GM13977 (cell line): ENCODE measurements at regions of chr12 and their contacts with region 1.

Region 1: DNA sequence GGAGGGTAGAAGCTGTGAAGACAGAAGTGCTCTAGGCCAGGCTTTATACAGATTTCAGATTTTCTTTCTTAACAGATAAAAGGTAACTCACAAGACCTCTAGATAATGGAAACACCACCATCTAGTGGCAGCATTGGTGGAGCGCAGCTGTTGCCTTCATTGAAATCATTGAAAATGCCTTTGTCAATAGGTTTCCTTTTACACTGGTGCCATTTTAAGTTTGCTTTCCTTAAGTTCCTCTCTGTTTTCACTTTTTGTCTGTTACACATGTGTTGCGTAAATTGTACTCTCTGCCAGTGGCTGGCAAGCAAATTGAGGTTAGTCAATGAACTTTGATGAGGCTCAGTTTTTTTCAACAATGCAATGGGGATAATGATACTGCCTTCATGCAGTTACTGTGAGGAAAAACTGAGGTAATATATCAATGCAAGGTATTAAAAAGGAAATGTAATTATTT is 31.1 kb downstream of the ALDH1L2 start:
- DNase-seq: peak; percentile 37
- CTCF ChIP-seq: peak; percentile 93

Region 2: DNA sequence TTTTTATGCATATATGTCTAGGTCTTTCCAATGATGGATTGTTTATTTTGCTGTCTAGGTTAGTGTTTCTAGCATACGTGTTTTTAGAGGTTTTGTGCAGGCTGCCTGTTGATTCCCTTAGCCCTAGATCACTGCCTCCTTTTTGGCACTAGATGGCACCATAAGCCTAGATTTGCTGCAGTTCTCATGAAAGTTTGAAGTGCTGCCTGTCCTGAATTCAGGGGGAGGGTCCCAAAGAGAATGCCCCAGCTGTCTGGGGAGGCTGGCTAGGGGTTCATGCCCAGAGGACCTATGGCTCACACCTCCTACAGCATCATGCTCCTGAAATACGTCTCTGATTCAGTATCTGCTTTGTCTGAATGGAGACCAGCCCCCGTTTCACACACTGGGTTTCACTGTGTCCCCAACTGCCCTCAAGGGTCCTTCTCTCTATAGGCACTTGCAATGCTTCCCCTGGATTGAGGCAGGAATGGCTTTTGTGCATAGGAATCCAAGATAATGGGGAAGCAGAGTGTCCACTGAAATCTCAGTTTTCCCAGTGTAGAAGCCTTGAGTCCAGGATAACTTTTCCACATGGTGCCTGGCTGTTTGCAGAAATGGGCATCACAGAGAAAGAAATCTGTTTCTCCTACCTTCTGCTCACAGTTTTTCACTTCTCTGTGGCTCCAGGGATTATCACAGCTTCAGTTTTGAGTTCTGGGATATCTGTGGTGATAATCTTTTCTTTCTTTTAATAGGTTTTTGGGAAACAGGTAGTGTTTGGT is 851.7 kb before region 1 on chr12:
- in situ Hi-C with region 1: loop called (anchors 10 kb)
- DNase-seq: peak; percentile 73
- CTCF ChIP-seq: peak; percentile 87

Region 3: GRCh38 chr12:104381731-104382480 is 671.2 kb before region 1 on chr12:
- in situ Hi-C with region 1: loop called (anchors 10 kb)
- DNase-seq: peak; percentile 80
- CTCF ChIP-seq: peak; percentile 93

Region 4: DNA sequence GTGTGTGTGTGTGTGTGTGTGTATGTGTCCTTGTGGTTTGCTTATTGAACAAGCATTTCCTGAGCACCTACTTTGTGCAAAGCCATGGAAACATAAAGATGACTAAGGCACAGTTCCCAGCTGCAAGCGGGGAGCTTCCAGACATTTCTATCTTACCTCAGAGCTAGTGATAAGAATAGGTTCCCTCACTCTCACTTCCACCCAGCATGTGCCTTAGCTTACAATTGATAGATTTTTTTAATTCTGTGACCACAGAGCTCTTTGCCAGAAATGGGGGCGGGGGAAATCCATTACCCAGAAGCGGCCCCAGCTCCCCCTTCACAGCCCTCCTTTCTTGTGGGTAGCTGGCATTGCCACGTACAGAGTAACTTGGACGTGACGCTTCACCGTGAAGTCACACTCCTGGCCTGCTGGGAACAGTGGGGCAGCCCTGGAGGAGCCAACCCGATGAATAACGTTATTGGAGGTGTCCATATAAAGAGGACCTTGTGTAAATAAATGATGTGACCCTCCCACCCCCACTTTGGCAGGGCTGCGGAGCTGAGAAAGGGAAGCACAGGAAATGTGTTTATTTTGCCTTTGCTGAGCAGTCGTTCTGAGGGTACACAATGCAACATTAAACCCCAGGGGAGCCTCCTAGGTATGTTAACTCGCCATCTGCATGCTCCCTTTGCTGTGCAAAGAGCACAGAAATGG is 357.5 kb before region 1 on chr12:
- in situ Hi-C with region 1: loop called (anchors 25 kb)
- DNase-seq: peak; percentile 50
- CTCF ChIP-seq: no peak